Heart left ventricle (tissue), 16 donors: ENCODE measurements at regions of chr2 and their contacts with region 1.

Region 1: GRCh38 chr2:48248241-48248933 is 281.6 kb upstream of the STON1 start:
- DNase-seq: peak in 1 of 5 donors; percentile 32
- ATAC-seq: peak; percentile 90 to 99 (median 95)
- H3K4me3 ChIP-seq: peak overlapping the region in 1 of 12 donors; percentile 0
- H3K27ac ChIP-seq: peak overlapping the region; percentile 50 to 89 (median 72)
- H3K4me1 ChIP-seq: peaks cover 14 to 52% (median 24%) of the 10 kb centered on the region in 12 donors
- H3K27me3 ChIP-seq: no peaks in the 10 kb centered on the region
- CTCF ChIP-seq: no peak
- POLR2A ChIP-seq: no peak

Region 2: DNA sequence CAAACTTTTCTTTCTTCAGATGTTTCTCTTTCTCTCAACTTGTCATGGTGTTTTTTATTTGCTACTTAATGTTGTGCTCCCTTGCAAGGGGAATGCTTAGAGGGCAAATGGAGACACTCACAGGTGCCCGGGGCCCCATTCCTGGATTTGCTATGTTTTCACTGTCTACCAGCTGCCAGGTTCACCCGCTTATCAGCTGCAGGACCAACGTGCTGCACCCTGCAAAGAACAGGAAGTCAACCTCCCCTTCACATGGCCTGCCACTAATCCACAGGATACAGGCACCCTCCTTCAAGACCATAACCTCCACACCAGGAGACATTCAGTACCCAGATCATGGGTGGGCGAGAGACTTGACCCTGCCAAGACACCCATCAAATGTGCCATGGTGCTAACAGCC is 44.0 kb after region 1 on chr2:
- intact Hi-C with region 1: loop called in 1 of 10 experiments (anchors 5 kb)
- DNase-seq: no peak
- ATAC-seq: no peak
- H3K4me3 ChIP-seq: no peak overlapping the region
- H3K27ac ChIP-seq: no peak overlapping the region
- H3K4me1 ChIP-seq: no peaks in the 10 kb centered on the region
- H3K27me3 ChIP-seq: no peaks in the 10 kb centered on the region
- CTCF ChIP-seq: no peak
- POLR2A ChIP-seq: no peak

Region 3: GRCh38 chr2:48306409-48307284 is 58.3 kb after region 1 on chr2:
- intact Hi-C with region 1: loop called in 3 of 10 experiments (anchors 2 to 10 kb)
- DNase-seq: no peak
- ATAC-seq: peak in 3 of 4 donors; percentile 36 to 49 (median 36)
- H3K4me3 ChIP-seq: no peak overlapping the region
- H3K27ac ChIP-seq: peak overlapping the region in 5 of 12 donors; percentile 17 to 35 (median 28)
- H3K4me1 ChIP-seq: peaks cover 0 to 10% (median 0%) of the 10 kb centered on the region in 12 donors
- H3K27me3 ChIP-seq: no peaks in the 10 kb centered on the region
- CTCF ChIP-seq: no peak
- POLR2A ChIP-seq: no peak

Region 4: DNA sequence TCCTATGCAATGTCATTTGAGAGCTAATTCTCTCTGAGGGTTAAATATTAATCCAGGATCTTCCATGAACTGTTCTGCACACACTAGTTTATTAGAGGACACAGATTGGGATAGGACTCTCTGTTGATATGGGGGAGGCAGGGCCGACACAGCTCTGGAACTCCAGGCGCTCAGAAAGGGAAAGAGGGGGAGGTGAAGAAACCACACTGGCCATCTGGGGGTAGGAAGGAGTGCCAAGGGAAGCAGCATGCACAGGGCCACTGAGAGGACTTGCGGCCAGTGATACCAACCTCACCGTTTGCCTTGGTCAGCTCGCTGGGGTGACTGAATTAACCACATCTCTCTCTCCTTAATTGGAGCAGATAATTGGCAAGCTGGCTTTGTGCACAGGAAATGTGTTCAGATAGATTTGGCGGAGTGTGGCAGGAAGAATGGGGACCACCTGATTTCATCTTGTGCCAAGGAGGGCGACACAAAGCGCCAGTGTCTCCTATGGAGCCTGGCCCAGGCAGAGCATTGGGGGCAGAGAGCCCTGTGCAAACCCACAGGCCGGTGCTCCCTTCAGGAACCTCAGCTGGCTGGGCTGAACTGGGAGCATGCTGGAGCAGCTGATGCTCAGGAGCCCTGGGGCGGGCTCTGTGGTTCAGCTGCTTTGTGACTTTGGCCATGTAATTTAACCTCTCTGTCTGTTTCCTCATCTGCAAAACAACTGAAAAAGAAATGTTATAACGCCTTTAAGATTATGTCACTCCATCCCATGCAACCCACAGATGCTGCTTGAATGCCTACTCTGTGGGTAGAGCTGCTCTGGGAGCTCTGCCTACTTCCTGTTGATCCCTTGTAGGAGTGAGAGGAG is 166.8 kb after region 1 on chr2:
- intact Hi-C with region 1: loop called in 2 of 10 experiments (anchors 10 kb)
- DNase-seq: peak in 3 of 5 donors; percentile 18 to 47 (median 31)
- ATAC-seq: peak; percentile 43 to 64 (median 54)
- H3K4me3 ChIP-seq: peak overlapping the region in 1 of 12 donors; percentile 7
- H3K27ac ChIP-seq: peak overlapping the region in 3 of 12 donors; percentile 16 to 51 (median 26)
- H3K4me1 ChIP-seq: peaks cover 0 to 54% (median 26%) of the 10 kb centered on the region in 12 donors
- H3K27me3 ChIP-seq: no peaks in the 10 kb centered on the region
- CTCF ChIP-seq: no peak
- POLR2A ChIP-seq: no peak